ENCODE measurements at regions of chr12 and their contacts with region 1.

Region 1: GRCh38 chr12:53205747-53206419 is 1.2 kb downstream of the ITGB7 start:
- DNase-seq: peak in 11 of 14 experiments; percentile 31 to 75 (median 55)
- ATAC-seq: peak; percentile 43
- H3K4me3 ChIP-seq: peak overlapping the region; percentile 84
- H3K4me3 Mint-ChIP-seq: peak overlapping the region; percentile 84
- H3K27ac ChIP-seq: peak overlapping the region; percentile 70 to 82
- H3K27ac Mint-ChIP-seq: peak overlapping the region; percentile 73
- H3K4me1 ChIP-seq: peaks cover 90% of the 10 kb centered on the region
- H3K4me1 Mint-ChIP-seq: peaks cover 72% of the 10 kb centered on the region
- H3K27me3 ChIP-seq: no peaks in the 10 kb centered on the region
- H3K27me3 Mint-ChIP-seq: no peaks in the 10 kb centered on the region
- CTCF ChIP-seq: no peak

Region 2: GRCh38 chr12:53241623-53242412 is 35.9 kb after region 1 on chr12:
- CTCF ChIA-PET with region 1: no interaction called
- POLR2A ChIA-PET with region 1: no interaction called
- intact Hi-C with region 1: no loop called
- DNase-seq: no peak
- ATAC-seq: no peak
- H3K4me3 ChIP-seq: no peak overlapping the region
- H3K4me3 Mint-ChIP-seq: no peak overlapping the region
- H3K27ac ChIP-seq: no peak overlapping the region
- H3K27ac Mint-ChIP-seq: no peak overlapping the region
- H3K4me1 ChIP-seq: peaks cover 12% of the 10 kb centered on the region
- H3K4me1 Mint-ChIP-seq: peaks cover 15% of the 10 kb centered on the region
- H3K27me3 ChIP-seq: no peaks in the 10 kb centered on the region
- H3K27me3 Mint-ChIP-seq: no peaks in the 10 kb centered on the region
- CTCF ChIP-seq: no peak

Region 3: GRCh38 chr12:53267999-53268647 is 62.2 kb after region 1 on chr12 and contains the start of gene ESPL1:
- CTCF ChIA-PET with region 1: interaction called, 37 read pairs
- POLR2A ChIA-PET with region 1: interaction called, 14 read pairs
- intact Hi-C with region 1: loop called in 1 of 2 experiments (anchors 5 kb)
- DNase-seq: peak; percentile 55 to 93 (median 74)
- ATAC-seq: peak; percentile 91
- H3K4me3 ChIP-seq: peak within 1 kb of the TSS; percentile 86
- H3K4me3 Mint-ChIP-seq: peak within 1 kb of the TSS; percentile 95
- H3K27ac ChIP-seq: peak within 1 kb of the TSS; percentile 40 to 50
- H3K27ac Mint-ChIP-seq: peak within 1 kb of the TSS; percentile 82
- H3K4me1 ChIP-seq: peaks cover 18% of the 10 kb centered on the region
- H3K4me1 Mint-ChIP-seq: peaks cover 19% of the 10 kb centered on the region
- H3K27me3 ChIP-seq: no peaks in the 10 kb centered on the region
- H3K27me3 Mint-ChIP-seq: no peaks in the 10 kb centered on the region
- CTCF ChIP-seq: peak; percentile 36
- total RNA-seq, gene ESPL1: 0.20 to 0.71 TPM